Caco-2 (cell line): ENCODE measurements at regions of chr12 and their contacts with region 1.

Region 1: GRCh38 chr12:109995686-109996482 is at the start of gene GIT2:
- DNase-seq: peak; percentile 92
- H3K4me3 ChIP-seq: peak within 1 kb of the TSS; percentile 85
- H3K4me3 Mint-ChIP-seq: peak within 1 kb of the TSS; percentile 87
- H3K27ac Mint-ChIP-seq: peak within 1 kb of the TSS; percentile 67
- H3K4me1 ChIP-seq: peaks cover 19% of the 10 kb centered on the region
- H3K4me1 Mint-ChIP-seq: peaks cover 18% of the 10 kb centered on the region
- H3K27me3 ChIP-seq: no peaks in the 10 kb centered on the region
- H3K27me3 Mint-ChIP-seq: no peaks in the 10 kb centered on the region
- CTCF ChIP-seq: no peak
- total RNA-seq, gene GIT2: 29.3 and 30.0 TPM in 2 replicates

Region 2: DNA sequence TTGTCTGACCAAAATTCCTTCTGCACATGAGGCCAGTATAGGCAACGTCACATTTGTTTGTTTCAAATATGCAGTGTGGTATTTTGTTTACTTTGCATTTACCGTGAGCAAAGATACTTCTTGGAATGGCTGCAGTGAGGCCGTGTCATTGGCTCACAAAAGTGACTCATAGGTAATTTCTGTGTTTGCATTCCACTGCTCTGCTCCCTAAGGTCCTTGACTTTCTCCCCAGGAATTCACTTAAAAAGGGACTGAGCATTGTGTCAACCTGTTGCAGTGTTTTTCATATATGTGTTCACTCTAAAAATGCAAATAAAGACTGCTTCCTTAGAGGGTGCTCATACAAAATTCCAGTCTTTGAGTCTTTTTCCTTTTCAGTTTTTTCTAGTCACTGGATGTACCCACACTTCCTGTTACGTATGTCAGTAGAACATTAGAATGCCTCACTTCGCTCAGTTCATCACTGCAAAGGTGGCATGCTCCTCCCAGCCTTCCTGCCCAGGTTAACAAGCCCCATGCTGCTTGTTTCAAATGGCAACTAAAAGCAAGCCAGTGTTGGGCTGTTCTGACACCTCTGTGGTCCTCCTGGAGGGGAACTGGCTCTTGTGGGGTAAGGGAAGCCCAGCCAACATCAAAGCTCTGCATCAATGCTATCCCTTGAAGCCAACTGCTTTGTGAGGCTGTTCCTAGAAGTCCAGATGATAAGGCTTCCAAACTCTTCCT is 43.4 kb after region 1 on chr12:
- CTCF ChIA-PET with region 1: no interaction called
- POLR2A ChIA-PET with region 1: no interaction called
- intact Hi-C with region 1: loop called (anchors 5 kb)
- DNase-seq: peak; percentile 85 to 86
- H3K4me3 ChIP-seq: no peak overlapping the region
- H3K4me3 Mint-ChIP-seq: peak overlapping the region; percentile 78
- H3K27ac Mint-ChIP-seq: peak overlapping the region; percentile 100
- H3K4me1 ChIP-seq: peaks cover 47% of the 10 kb centered on the region
- H3K4me1 Mint-ChIP-seq: peaks cover 32% of the 10 kb centered on the region
- H3K27me3 ChIP-seq: no peaks in the 10 kb centered on the region
- H3K27me3 Mint-ChIP-seq: no peaks in the 10 kb centered on the region
- CTCF ChIP-seq: no peak